SK-N-SH (cell line): ENCODE measurements at regions of chr13 and their contacts with region 1.

Region 1: DNA sequence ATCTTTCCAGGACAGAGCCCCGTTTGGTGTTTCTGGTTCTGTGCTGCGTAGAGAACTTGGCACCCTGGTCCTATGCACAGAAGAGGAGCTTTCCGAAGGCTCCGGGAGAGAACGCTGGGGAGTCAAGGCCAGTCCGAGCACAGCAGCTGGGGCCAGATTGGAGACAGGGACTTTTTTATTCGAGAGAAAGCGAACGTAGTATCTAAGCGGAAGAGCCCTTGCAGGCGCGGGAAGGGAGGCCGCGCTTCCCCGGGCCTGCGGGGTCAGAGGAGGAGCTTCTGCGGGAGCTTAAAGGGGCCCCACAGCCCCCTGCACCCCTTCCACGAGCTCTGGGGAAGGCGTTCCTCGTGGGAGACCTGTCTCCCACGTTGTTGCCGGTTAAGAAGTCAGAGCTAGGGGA is 48.6 kb upstream of the ARHGEF7 start:
- DNase-seq: peak; percentile 27
- H3K4me3 ChIP-seq: no peak overlapping the region
- H3K27ac ChIP-seq: no peak overlapping the region
- H3K4me1 ChIP-seq: peaks cover 0 to 5% of the 10 kb centered on the region in 2 experiments; a peak in 1 of 4 replicates
- H3K27me3 ChIP-seq: peaks cover 21% of the 10 kb centered on the region
- CTCF ChIP-seq: no peak
- EP300 ChIP-seq: no peak
- RAD21 ChIP-seq: no peak

Region 2: GRCh38 chr13:111095031-111095840 is 28.7 kb after region 1 on chr13:
- CTCF ChIA-PET with region 1: interaction called, 15 read pairs
- POLR2A ChIA-PET with region 1: no interaction called
- DNase-seq: no peak
- H3K4me3 ChIP-seq: no peak overlapping the region
- H3K27ac ChIP-seq: no peak overlapping the region
- H3K4me1 ChIP-seq: no peaks in the 10 kb centered on the region
- H3K27me3 ChIP-seq: peaks cover 21% of the 10 kb centered on the region; the same call in 1 of the 2 replicates
- CTCF ChIP-seq: no peak
- EP300 ChIP-seq: no peak
- RAD21 ChIP-seq: no peak

Region 3: GRCh38 chr13:111114362-111115060 is 48.0 kb after region 1 on chr13:
- CTCF ChIA-PET with region 1: interaction called, 11 read pairs
- POLR2A ChIA-PET with region 1: no interaction called
- DNase-seq: peak; percentile 77
- H3K4me3 ChIP-seq: peak overlapping the region; percentile 50 to 56
- H3K27ac ChIP-seq: peak overlapping the region in 1 of 2 experiments; percentile 72; a peak in 2 of 4 replicates
- H3K4me1 ChIP-seq: peaks cover 0 to 27% of the 10 kb centered on the region in 2 experiments; a peak in 2 of 4 replicates
- H3K27me3 ChIP-seq: peaks cover 58% of the 10 kb centered on the region
- CTCF ChIP-seq: no peak
- EP300 ChIP-seq: no peak
- RAD21 ChIP-seq: no peak

Region 4: GRCh38 chr13:111153279-111153976 is 86.9 kb after region 1 on chr13:
- CTCF ChIA-PET with region 1: interaction called, 10 read pairs
- POLR2A ChIA-PET with region 1: no interaction called
- DNase-seq: peak; percentile 98
- H3K4me3 ChIP-seq: peak overlapping the region; percentile 80 to 92
- H3K27ac ChIP-seq: peak overlapping the region; percentile 91 to 92
- H3K4me1 ChIP-seq: peaks cover 6 to 15% of the 10 kb centered on the region in 2 experiments; a peak in 2 of 4 replicates
- H3K27me3 ChIP-seq: no peaks in the 10 kb centered on the region
- CTCF ChIP-seq: peak; percentile 34; the same call in 1 of the 2 replicates
- EP300 ChIP-seq: peak in 1 of 2 experiments; percentile 28; a peak in 1 of 4 replicates
- RAD21 ChIP-seq: peak; percentile 30; the same call in 1 of the 2 replicates

Region 5: DNA sequence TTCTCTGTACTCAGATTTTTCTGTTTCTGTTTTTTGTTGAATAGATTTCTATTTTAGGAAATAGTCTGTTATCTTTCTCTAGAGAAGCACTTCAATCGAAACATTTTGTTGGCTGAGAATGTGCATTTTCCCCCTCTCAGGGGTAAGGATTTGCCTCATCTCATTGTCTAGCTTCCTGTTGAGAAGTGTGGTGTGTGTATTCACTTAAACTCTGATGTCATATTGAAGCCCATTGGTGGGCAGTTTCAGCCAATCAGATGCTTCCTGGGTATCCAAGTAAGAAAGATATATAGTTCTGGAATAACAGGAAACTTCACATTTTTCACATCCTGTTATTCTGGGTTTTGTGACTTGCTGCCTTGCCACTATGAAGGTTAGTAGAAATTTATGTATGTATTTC is 136.2 kb after region 1 on chr13:
- CTCF ChIA-PET with region 1: interaction called, 10 read pairs
- POLR2A ChIA-PET with region 1: no interaction called
- DNase-seq: peak; percentile 69
- H3K4me3 ChIP-seq: no peak overlapping the region
- H3K27ac ChIP-seq: peak overlapping the region; percentile 68 to 72
- H3K4me1 ChIP-seq: peaks cover 14 to 20% of the 10 kb centered on the region in 2 experiments; a peak in 3 of 4 replicates
- H3K27me3 ChIP-seq: no peaks in the 10 kb centered on the region
- CTCF ChIP-seq: no peak
- EP300 ChIP-seq: no peak
- RAD21 ChIP-seq: no peak

Region 6: GRCh38 chr13:111216166-111216960 is 149.8 kb after region 1 on chr13:
- CTCF ChIA-PET with region 1: interaction called, 48 read pairs
- POLR2A ChIA-PET with region 1: no interaction called
- DNase-seq: peak; percentile 61
- H3K4me3 ChIP-seq: no peak overlapping the region
- H3K27ac ChIP-seq: no peak overlapping the region; a peak in 1 of 4 replicates
- H3K4me1 ChIP-seq: peaks cover 5 to 25% of the 10 kb centered on the region in 2 experiments; a peak in 3 of 4 replicates
- H3K27me3 ChIP-seq: no peaks in the 10 kb centered on the region
- CTCF ChIP-seq: peak; percentile 43
- EP300 ChIP-seq: no peak
- RAD21 ChIP-seq: peak; percentile 63

Region 7: DNA sequence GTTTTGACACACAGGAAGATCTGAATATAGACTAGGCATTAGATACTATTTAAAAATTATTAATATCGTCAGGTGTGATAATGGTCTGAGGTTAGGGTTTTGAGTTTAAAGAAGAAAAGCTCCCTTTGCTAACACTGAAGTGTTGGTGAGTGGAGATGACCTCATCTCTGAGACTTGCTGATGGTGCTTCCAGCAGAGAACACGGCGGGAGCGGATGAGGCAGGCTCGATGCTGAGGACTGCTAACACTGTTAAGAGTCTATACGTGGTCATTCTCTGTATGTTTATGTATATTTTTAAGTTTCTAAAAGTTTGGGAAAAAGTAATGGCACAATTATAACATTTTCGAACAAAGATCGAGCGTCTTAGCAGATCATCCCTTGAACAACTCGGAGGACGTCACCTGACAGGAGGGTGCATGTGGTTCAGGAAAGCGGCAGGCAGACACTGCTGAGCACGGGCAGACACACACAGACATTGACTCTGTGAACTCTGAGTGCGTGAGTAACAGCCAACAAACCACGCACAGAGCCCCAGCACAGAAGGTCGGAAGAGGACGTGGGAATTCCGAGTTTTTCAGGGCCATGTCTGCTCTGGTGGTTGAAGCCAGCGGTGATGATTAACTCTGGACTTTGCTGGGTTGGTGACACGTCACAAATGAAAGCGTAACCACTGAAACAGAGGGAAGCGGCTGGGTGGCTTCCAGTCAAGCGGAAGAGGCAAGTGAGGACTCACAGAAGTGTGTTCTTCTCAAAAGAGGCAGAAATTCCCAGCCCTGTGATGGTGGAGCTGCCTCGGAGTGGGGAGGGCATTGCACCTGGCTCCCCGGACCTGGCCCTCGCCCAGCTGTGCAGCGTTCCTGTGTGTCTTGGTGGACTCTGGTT is 162.0 kb after region 1 on chr13:
- CTCF ChIA-PET with region 1: interaction called, 31 read pairs
- POLR2A ChIA-PET with region 1: no interaction called
- DNase-seq: no peak
- H3K4me3 ChIP-seq: no peak overlapping the region
- H3K27ac ChIP-seq: no peak overlapping the region
- H3K4me1 ChIP-seq: peaks cover 0 to 10% of the 10 kb centered on the region in 2 experiments; a peak in 1 of 4 replicates
- H3K27me3 ChIP-seq: no peaks in the 10 kb centered on the region
- CTCF ChIP-seq: no peak
- EP300 ChIP-seq: no peak
- RAD21 ChIP-seq: no peak